Heart right ventricle (tissue), 16 donors: ENCODE measurements at regions of chr3 and their contacts with region 1.

Region 1: GRCh38 chr3:185824476-185825378 is at the start of gene IGF2BP2:
- DNase-seq: peak; percentile 49 to 73
- ATAC-seq: peak; percentile 64 to 84 (median 78)
- H3K4me3 ChIP-seq: peak within 1 kb of the TSS; percentile 58 to 83 (median 74)
- H3K27ac ChIP-seq: peak within 1 kb of the TSS in 9 of 10 donors; percentile 33 to 77 (median 71)
- H3K4me1 ChIP-seq: peaks cover 2 to 27% (median 16%) of the 10 kb centered on the region in 9 donors
- H3K27me3 ChIP-seq: peaks cover 0 to 63% (median 41%) of the 10 kb centered on the region in 7 donors
- CTCF ChIP-seq: peak in 1 of 9 donors; percentile 20
- total RNA-seq, gene IGF2BP2: 13.0 to 17.8 (median 15.7) TPM

Region 2: DNA sequence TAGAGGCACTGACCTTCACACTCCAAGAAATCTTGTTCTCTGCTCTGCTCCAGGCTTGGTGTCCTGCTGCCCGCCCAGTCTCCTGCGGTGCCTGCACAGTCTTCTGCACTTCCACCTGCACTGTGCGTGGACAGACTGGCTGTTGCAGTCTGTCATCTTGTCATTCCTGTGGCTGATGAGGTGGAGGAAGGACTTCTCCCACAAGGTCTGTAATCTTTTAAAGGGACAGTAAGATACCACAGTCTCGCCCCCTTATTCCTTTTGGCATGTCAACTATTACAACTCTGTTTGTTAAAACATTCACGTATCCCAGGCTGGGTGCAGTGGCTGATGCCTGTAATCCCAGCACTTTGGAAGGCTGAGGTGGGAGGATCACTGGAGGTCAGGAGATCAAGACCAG is 54.2 kb after region 1 on chr3:
- intact Hi-C with region 1: no loop called
- DNase-seq: no peak
- ATAC-seq: no peak
- H3K4me3 ChIP-seq: no peak overlapping the region
- H3K27ac ChIP-seq: no peak overlapping the region
- H3K4me1 ChIP-seq: no peaks in the 10 kb centered on the region
- H3K27me3 ChIP-seq: peaks cover 0 to 24% (median 3%) of the 10 kb centered on the region in 7 donors
- CTCF ChIP-seq: no peak

Region 3: DNA sequence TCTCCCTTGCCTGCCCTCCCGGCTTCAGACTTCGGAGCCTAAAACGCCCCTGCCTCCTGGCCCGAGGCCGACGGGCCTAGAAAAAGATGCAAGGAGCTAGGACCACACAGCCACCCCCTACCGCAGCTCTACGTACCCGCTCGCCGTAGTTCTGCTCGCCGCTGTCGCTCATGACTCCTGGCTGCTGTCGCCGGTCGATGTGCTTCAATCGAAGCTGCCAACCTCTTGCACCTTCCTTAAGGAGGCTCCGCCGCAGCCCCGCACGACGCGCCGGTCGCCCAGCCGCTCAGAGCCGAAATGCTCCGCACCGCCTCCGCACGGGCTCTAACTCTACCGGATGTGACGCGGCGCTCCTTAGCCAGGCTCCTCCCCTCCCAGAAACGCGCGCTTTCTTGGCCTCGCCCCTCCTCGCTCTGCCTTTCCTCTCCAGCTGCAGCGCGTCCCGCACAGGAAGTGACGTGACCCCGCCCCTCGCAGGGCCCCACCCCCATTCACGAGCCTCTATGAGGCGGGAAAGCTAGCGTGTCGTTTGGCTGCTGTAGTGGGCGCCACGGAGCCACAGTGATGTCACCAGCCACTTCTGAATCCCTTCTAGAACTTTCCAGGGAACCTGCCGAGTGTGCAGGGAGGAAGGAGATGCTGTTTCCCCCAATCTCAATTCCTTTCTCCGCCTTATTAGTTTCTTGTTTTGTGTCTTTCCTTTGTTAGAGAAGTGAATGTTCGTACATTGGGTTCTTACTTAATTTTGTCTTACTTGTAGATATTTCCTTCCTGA is 113.1 kb after region 1 on chr3 and contains the start of gene TRA2B:
- intact Hi-C with region 1: loop called in 3 of 10 experiments (anchors 10 kb)
- DNase-seq: peak; percentile 99
- ATAC-seq: peak; percentile 98 to 99 (median 99)
- H3K4me3 ChIP-seq: peak within 1 kb of the TSS; percentile 80 to 100 (median 94)
- H3K27ac ChIP-seq: peak within 1 kb of the TSS; percentile 98 to 100 (median 100)
- H3K4me1 ChIP-seq: peaks cover 0 to 39% (median 30%) of the 10 kb centered on the region in 9 donors
- H3K27me3 ChIP-seq: no peaks in the 10 kb centered on the region
- CTCF ChIP-seq: peak in 8 of 9 donors; percentile 12 to 66 (median 40)
- total RNA-seq, gene TRA2B: 46.3 to 75.9 (median 52.1) TPM

Region 4: DNA sequence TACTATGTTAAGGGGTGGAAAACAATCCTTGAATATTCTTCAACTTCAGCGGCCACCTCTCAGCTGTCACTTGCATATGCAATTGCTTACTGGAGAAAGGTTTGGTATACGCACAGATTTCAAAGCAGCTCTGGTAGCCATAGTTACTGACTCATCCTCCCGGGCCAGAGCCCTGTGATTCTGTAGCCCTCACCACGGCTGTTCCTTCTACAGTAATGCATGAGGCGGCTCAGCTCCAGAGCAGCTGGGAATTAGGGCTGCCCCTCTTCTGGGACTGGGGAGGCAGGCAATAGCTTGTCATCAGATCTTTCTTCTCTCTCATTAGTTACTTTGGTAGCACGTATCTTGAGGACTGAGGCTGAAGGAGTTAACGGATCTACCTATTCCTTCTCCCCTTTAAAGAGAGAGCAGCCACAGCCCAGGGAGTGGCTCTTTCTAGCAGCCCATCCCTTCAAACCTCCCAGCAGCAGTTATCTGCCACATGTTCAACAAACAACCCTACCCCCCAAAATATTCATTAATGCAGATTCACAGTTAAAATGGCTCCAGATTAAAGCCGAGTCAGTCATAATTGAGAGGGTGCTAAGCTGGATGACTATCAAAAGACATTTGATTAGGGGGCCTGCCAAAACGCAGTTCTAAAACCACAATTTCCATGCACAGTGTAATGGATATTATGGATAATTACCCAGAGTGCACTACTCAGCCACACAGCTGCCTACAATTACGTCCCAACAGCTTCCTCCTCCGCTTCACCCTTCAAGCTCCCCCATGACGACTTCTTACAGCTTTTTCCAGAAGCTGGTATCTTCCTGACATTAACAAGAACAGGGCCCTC is 229.4 kb after region 1 on chr3:
- intact Hi-C with region 1: no loop called
- DNase-seq: no peak
- ATAC-seq: no peak
- H3K4me3 ChIP-seq: no peak overlapping the region
- H3K27ac ChIP-seq: no peak overlapping the region
- H3K4me1 ChIP-seq: no peaks in the 10 kb centered on the region
- H3K27me3 ChIP-seq: no peaks in the 10 kb centered on the region
- CTCF ChIP-seq: no peak